ENCODE measurements at regions of chr6 and their contacts with region 1.

Region 1: GRCh38 chr6:53171605-53172446 is 23.2 kb upstream of the GCM1 start:
- DNase-seq: peak; percentile 92
- H3K4me3 Mint-ChIP-seq: no peak overlapping the region
- H3K27ac Mint-ChIP-seq: no peak overlapping the region
- H3K4me1 Mint-ChIP-seq: peaks cover 28% of the 10 kb centered on the region
- H3K27me3 Mint-ChIP-seq: no peaks in the 10 kb centered on the region
- CTCF ChIP-seq: peak; percentile 100

Region 2: GRCh38 chr6:53294095-53294494 is 122.3 kb after region 1 on chr6:
- CTCF ChIA-PET with region 1: interaction called, 3 read pairs
- intact Hi-C with region 1: loop called (anchors 5 kb)
- DNase-seq: peak; percentile 3
- H3K4me3 Mint-ChIP-seq: no peak overlapping the region
- H3K27ac Mint-ChIP-seq: no peak overlapping the region
- H3K4me1 Mint-ChIP-seq: peaks cover 28% of the 10 kb centered on the region
- H3K27me3 Mint-ChIP-seq: no peaks in the 10 kb centered on the region
- CTCF ChIP-seq: peak; percentile 38

Region 3: GRCh38 chr6:53410508-53411258 is 238.9 kb after region 1 on chr6:
- CTCF ChIA-PET with region 1: interaction called, 3 read pairs
- intact Hi-C with region 1: loop called (anchors 1 kb)
- DNase-seq: peak; percentile 45
- H3K4me3 Mint-ChIP-seq: no peak overlapping the region
- H3K27ac Mint-ChIP-seq: no peak overlapping the region
- H3K4me1 Mint-ChIP-seq: no peaks in the 10 kb centered on the region
- H3K27me3 Mint-ChIP-seq: no peaks in the 10 kb centered on the region
- CTCF ChIP-seq: peak; percentile 50

Region 4: DNA sequence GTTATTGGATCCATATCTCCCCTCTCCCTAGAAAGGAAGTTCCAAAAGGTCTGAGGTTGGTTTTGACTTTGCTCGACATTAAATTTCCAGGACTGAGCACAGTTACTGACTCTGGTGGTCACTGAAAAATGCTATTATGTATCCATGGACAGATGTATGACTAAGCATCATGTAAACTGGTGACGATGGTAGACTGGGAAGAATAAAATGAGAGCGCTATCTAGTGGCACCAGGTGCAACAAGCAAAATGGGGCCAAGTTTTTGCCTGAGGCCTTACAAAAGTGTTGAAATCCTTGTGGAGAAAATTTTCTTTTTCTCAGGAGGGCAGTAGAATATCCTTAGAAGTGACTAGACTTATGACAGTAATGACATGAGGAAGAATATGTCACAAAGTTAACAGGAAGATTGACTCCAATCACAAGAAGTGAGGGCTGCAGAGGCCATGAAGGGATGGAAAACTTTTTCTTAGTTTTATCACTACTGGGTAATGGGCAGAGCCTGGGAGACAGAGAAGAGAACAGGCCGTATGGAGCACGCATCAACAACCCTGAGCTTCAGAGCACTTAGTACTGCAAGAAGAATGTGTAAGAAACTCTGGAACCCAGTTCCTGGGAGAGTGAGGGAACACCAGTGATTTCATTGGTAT is 265.9 kb after region 1 on chr6:
- CTCF ChIA-PET with region 1: no interaction called
- intact Hi-C with region 1: loop called (anchors 1 kb)
- DNase-seq: peak; percentile 50
- H3K4me3 Mint-ChIP-seq: no peak overlapping the region
- H3K27ac Mint-ChIP-seq: no peak overlapping the region
- H3K4me1 Mint-ChIP-seq: peaks cover 8% of the 10 kb centered on the region
- H3K27me3 Mint-ChIP-seq: no peaks in the 10 kb centered on the region
- CTCF ChIP-seq: peak; percentile 52

Region 5: GRCh38 chr6:53484476-53485280 is 312.9 kb after region 1 on chr6:
- CTCF ChIA-PET with region 1: interaction called, 3 read pairs
- intact Hi-C with region 1: loop called (anchors 1 kb)
- DNase-seq: peak; percentile 64
- H3K4me3 Mint-ChIP-seq: no peak overlapping the region
- H3K27ac Mint-ChIP-seq: no peak overlapping the region
- H3K4me1 Mint-ChIP-seq: no peaks in the 10 kb centered on the region
- H3K27me3 Mint-ChIP-seq: no peaks in the 10 kb centered on the region
- CTCF ChIP-seq: peak; percentile 71

Region 6: DNA sequence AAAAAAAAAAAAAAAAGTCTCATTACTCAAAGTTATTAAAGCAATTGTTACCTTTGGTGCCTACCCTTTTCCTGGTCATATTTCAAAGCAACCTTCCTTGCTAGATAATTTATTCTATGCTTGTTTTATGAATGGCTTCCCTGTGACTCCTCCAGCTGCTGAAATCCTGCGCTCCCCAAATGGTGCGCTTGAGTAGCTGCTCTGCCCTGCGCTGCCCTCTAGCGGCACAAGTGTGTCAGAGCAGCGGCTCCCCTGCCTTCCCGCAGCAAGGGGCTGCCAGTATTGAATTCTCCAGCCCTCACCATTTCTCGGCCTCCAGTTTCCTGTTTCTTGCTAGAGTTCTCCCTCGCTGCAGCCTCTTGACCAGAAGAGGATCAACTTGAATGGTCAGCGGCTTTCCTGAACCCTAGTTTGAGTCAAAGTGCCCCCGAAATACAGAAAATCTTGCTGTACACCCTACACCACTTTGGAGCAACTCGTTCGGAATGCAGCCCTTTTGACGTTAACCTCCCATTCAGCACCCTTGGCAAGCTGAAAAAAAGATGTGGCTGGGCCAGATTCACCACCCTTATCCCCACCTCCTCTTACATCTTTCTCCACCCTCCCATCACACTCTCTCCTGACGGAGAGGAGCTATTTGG is 554.1 kb after region 1 on chr6:
- CTCF ChIA-PET with region 1: no interaction called
- intact Hi-C with region 1: loop called (anchors 10 kb)
- DNase-seq: peak; percentile 83
- H3K4me3 Mint-ChIP-seq: peak overlapping the region; percentile 47
- H3K27ac Mint-ChIP-seq: peak overlapping the region; percentile 54
- H3K4me1 Mint-ChIP-seq: peaks cover 38% of the 10 kb centered on the region
- H3K27me3 Mint-ChIP-seq: no peaks in the 10 kb centered on the region
- CTCF ChIP-seq: peak; percentile 92